ENCODE measurements at regions of chr19 and their contacts with region 1.

Region 1: GRCh38 chr19:17405250-17406038 is at the start of gene BST2:
- DNase-seq: peak; percentile 85 to 92 (median 91)
- H3K4me3 ChIP-seq: peak within 1 kb of the TSS; percentile 18 to 79 (median 73)
- H3K27ac ChIP-seq: peak within 1 kb of the TSS; percentile 64 to 81
- H3K4me1 ChIP-seq: peaks cover 11 to 49% (median 40%) of the 10 kb centered on the region in 4 experiments
- H3K27me3 ChIP-seq: no peaks in the 10 kb centered on the region

Region 2: GRCh38 chr19:17052439-17053210 is 352.8 kb before region 1 on chr19:
- CTCF ChIA-PET with region 1: no interaction called
- POLR2A ChIA-PET with region 1: no interaction called
- DNase-seq: peak; percentile 43 to 66 (median 58)
- H3K4me3 ChIP-seq: no peak overlapping the region
- H3K27ac ChIP-seq: no peak overlapping the region
- H3K4me1 ChIP-seq: no peaks in the 10 kb centered on the region
- H3K27me3 ChIP-seq: no peaks in the 10 kb centered on the region

Region 3: GRCh38 chr19:17419621-17420466 is 14.4 kb after region 1 on chr19 and contains the start of gene MVB12A:
- CTCF ChIA-PET with region 1: interaction called, 17 read pairs
- POLR2A ChIA-PET with region 1: interaction called, 13 read pairs
- DNase-seq: peak; percentile 98 to 99 (median 99)
- H3K4me3 ChIP-seq: peak within 1 kb of the TSS; percentile 69 to 91 (median 79)
- H3K27ac ChIP-seq: peak within 1 kb of the TSS in 1 of 2 experiments; percentile 67
- H3K4me1 ChIP-seq: peaks cover 6 to 26% (median 17%) of the 10 kb centered on the region in 4 experiments
- H3K27me3 ChIP-seq: no peaks in the 10 kb centered on the region